ENCODE measurements at regions of chr6 and their contacts with region 1.

Region 1: GRCh38 chr6:136696238-136696637 is 96.0 kb downstream of the MAP3K5 start:
- DNase-seq: peak; percentile 62
- H3K4me3 Mint-ChIP-seq: peak overlapping the region; percentile 60
- H3K27ac Mint-ChIP-seq: peak overlapping the region; percentile 86
- H3K4me1 Mint-ChIP-seq: peaks cover 38% of the 10 kb centered on the region
- H3K27me3 Mint-ChIP-seq: no peaks in the 10 kb centered on the region
- CTCF ChIP-seq: no peak

Region 2: DNA sequence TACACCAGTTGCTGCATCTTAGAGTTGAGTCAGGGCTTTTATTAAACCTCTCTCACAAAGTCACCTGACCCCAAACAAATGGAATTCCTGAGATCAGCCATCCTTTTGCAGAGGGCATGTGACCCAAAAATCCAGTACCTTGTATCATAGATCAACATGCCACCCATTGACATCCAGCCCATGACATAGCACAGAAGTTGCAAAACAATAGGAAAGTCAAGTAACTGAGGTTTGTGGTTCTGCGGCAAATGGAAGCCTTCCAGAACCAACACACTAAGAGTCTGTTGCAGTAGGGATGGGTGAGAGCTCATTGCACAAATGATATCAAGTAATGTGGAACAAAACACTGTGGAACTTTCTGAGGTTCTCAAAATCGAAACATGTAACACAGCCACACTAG is 733.5 kb before region 1 on chr6:
- CTCF ChIA-PET with region 1: no interaction called
- POLR2A ChIA-PET with region 1: no interaction called
- intact Hi-C with region 1: no loop called
- DNase-seq: peak; percentile 87
- H3K4me3 Mint-ChIP-seq: no peak overlapping the region
- H3K27ac Mint-ChIP-seq: no peak overlapping the region
- H3K4me1 Mint-ChIP-seq: peaks cover 10% of the 10 kb centered on the region
- H3K27me3 Mint-ChIP-seq: no peaks in the 10 kb centered on the region
- CTCF ChIP-seq: no peak

Region 3: DNA sequence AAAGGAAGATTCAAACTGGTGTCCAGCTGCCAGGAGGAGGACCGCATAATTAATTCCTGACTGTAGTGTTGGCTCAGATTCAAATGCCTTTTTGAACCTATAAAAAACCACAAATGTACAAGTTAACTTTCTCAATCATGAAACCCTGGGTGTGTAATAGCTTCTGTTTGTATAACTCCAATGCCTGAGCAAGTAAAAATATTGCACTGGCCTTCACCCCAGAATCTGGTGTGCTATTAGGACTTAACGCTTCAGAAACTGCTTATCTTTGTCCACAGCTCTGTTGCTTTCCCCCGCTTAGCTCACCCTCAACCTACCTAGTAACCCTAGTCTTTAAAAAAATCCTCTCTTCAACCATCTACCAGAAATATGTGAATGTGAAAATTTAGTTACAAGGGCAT is 26.9 kb before region 1 on chr6:
- CTCF ChIA-PET with region 1: interaction called, 3 read pairs
- POLR2A ChIA-PET with region 1: interaction called, 12 read pairs
- intact Hi-C with region 1: no loop called
- DNase-seq: peak; percentile 92
- H3K4me3 Mint-ChIP-seq: peak overlapping the region; percentile 5
- H3K27ac Mint-ChIP-seq: peak overlapping the region; percentile 47
- H3K4me1 Mint-ChIP-seq: peaks cover 16% of the 10 kb centered on the region
- H3K27me3 Mint-ChIP-seq: no peaks in the 10 kb centered on the region
- CTCF ChIP-seq: no peak

Region 4: DNA sequence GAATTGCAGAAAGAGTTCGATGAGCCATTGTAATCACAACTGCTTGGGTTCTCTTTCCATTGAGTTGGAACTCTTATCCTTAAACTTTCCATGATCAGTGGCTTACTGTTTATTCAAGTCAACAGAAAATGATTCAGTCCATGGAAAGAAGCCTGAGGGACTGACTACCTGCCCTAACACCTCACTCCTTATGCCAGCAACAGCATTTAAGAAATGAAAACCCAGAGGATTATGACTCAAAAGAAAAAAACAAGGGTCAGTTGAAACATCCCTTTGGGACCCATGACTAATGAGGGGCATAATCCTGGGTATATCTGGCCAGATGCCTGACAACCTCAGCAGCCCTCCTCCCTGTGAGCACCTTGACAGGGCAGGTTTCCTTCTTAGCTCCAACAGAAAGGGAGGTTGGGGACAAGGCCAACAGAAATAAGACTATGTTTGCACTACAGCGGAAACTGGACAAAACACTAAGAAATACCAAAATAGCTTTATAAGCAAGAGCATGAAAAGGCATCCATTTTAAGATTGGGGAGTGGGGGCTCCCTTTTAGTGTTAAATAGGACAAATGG is 10.6 kb before region 1 on chr6:
- CTCF ChIA-PET with region 1: no interaction called
- POLR2A ChIA-PET with region 1: interaction called, 14 read pairs
- intact Hi-C with region 1: no loop called
- DNase-seq: peak; percentile 82
- H3K4me3 Mint-ChIP-seq: no peak overlapping the region
- H3K27ac Mint-ChIP-seq: no peak overlapping the region
- H3K4me1 Mint-ChIP-seq: peaks cover 13% of the 10 kb centered on the region
- H3K27me3 Mint-ChIP-seq: no peaks in the 10 kb centered on the region
- CTCF ChIP-seq: no peak

Region 5: GRCh38 chr6:136732889-136733288 is 36.7 kb after region 1 on chr6:
- CTCF ChIA-PET with region 1: no interaction called
- POLR2A ChIA-PET with region 1: interaction called, 7 read pairs
- intact Hi-C with region 1: loop called (anchors 1 kb)
- DNase-seq: no peak
- H3K4me3 Mint-ChIP-seq: no peak overlapping the region
- H3K27ac Mint-ChIP-seq: no peak overlapping the region
- H3K4me1 Mint-ChIP-seq: peaks cover 16% of the 10 kb centered on the region
- H3K27me3 Mint-ChIP-seq: no peaks in the 10 kb centered on the region
- CTCF ChIP-seq: no peak

Measured in MCF 10A (cell line).